Astrocyte of the cerebellum (primary cell): ENCODE measurements at regions of chr2 and their contacts with region 1.

Region 1: DNA sequence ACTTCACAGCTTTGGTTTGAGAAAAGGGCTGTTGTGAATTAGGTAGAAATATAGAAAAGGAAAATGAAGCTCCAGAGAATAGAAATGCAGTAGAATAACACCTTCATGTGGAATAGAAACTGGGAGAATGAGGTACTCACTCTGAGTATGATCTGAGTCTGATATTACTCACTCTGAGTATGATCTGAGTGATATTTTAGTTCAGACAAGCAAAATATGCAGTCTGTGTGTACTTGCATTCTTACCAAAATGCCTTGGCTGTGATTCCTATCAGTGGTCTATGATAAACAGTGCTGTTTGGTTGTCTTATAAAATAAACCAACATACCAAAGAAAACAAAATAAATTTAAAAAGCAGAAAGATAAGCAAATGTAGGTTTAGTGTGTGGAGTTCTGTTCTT is 487.6 kb downstream of the THSD7B start:
- DNase-seq: no peak
- H3K4me3 ChIP-seq: no peak overlapping the region
- CTCF ChIP-seq: no peak

Region 2: DNA sequence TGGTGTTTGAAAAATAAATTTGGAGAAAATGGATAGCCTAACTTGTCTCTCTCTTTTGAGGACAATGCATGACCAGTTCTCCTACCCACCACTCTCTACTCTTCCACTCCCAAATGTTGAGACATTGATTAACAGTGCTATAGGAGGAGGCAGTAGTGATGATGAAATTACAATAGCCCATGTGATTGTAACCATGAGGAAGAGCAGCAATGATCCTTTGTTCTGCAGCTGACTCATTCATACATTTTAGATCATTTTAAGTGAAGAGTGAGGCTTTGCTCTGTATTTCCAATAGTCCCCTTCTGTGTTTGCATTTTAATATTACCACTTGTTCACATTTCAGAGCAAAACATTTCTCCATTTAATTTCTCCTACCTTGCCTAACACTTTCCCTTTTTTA is 104.7 kb after region 1 on chr2:
- in situ Hi-C with region 1: loop called (anchors 10 kb)
- DNase-seq: no peak
- H3K4me3 ChIP-seq: no peak overlapping the region
- CTCF ChIP-seq: no peak